HepG2 (cell line): ENCODE measurements at regions of chr11 and their contacts with region 1.

Region 1: GRCh38 chr11:64088162-64089026 is 52.7 kb downstream of the FLRT1 start:
- DNase-seq: peak; percentile 45
- ATAC-seq: peak; percentile 34
- H3K4me3 ChIP-seq: no peak overlapping the region
- H3K27ac ChIP-seq: no peak overlapping the region
- H3K4me1 ChIP-seq: peaks cover 59% of the 10 kb centered on the region
- H3K27me3 ChIP-seq: no peaks in the 10 kb centered on the region
- CTCF ChIP-seq: peak; percentile 70
- EP300 ChIP-seq: no peak
- POLR2A ChIP-seq: no peak
- RAD21 ChIP-seq: 0 out of 2 replicates have a peak, but pooled peaks have one; percentile 37

Region 2: DNA sequence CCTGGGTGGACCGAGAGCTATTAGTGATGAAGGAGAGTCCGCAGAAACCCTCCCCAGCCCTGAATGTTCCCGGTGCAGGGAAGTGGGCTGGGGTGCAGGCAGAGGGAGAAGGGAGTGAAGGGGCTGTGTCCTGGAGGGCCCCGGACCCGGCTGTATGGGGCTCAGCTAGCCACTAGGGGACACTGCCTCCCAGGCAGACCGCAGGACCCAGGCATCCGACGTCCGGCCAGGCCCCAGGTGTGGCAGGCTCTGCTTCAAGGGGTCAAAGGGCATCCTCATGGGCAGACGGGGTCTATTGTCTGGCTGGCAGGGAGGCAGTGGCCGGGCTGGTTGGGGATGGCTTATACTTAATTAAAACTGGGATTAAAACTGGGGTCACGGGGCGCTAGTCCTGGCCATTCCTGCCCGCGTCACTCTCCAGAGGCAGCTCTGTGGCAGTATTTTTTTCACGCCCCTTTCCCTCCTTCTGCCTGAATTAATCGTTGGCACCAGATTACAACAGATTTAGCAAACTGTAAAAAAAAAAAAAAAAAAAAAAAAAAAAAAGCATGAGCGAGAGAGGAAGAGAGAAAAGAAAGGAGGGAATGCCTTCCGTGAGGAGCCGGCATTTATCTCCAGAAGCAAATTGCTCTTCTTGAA is 47.6 kb before region 1 on chr11:
- CTCF ChIA-PET with region 1: no interaction called
- POLR2A ChIA-PET with region 1: no interaction called
- in situ Hi-C with region 1: no loop called
- intact Hi-C with region 1: loop called (anchors 5 kb)
- DNase-seq: peak; percentile 27
- ATAC-seq: peak; percentile 49
- H3K4me3 ChIP-seq: no peak overlapping the region
- H3K27ac ChIP-seq: no peak overlapping the region
- H3K4me1 ChIP-seq: peaks cover 26% of the 10 kb centered on the region
- H3K27me3 ChIP-seq: peaks cover 2 to 21% of the 10 kb centered on the region in 2 experiments; a peak in 3 of 5 replicates
- CTCF ChIP-seq: peak; percentile 79
- EP300 ChIP-seq: no peak
- POLR2A ChIP-seq: no peak
- RAD21 ChIP-seq: peak; percentile 87

Region 3: GRCh38 chr11:64152841-64153691 is 64.7 kb after region 1 on chr11:
- CTCF ChIA-PET with region 1: interaction called, 4 read pairs
- POLR2A ChIA-PET with region 1: no interaction called
- in situ Hi-C with region 1: loop called (anchors 5 kb)
- intact Hi-C with region 1: loop called (anchors 1 kb)
- DNase-seq: peak; percentile 15
- ATAC-seq: peak; percentile 84
- H3K4me3 ChIP-seq: no peak overlapping the region; a peak in 1 of 6 replicates
- H3K27ac ChIP-seq: no peak overlapping the region
- H3K4me1 ChIP-seq: peaks cover 34% of the 10 kb centered on the region
- H3K27me3 ChIP-seq: no peaks in the 10 kb centered on the region
- CTCF ChIP-seq: peak; percentile 94
- EP300 ChIP-seq: no peak
- POLR2A ChIP-seq: no peak
- RAD21 ChIP-seq: peak; percentile 75